ENCODE measurements at regions of chr4 and their contacts with region 1.

Region 1: DNA sequence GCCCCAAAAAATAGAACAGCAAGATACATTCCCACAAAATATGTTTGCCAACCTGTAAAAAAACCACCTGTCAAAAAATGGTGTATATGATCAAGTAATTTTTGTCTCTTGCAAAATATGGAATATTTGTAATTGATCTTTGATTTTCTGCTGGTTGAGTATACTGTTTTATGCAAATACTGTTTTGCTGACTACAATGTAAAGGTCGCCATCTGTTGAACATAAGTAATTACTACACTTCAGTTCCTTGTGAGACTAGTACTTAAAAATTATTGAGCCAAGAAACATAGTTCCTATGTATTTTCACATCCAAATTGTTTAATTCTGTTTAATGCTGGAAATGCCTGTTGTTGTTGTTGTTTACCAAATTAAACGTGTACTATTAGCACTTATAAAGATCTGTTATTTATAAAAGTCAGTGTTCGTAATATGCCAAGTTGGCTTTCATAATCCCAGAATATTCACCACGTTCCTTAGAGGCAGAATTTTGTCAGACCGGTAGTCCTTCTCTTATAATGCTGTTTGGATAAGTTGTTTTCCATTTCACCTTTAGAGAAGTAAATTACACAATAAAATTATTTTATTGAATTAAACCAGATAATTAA is 144.2 kb downstream of the PDLIM5 start:
- DNase-seq: peak; percentile 51

Region 2: DNA sequence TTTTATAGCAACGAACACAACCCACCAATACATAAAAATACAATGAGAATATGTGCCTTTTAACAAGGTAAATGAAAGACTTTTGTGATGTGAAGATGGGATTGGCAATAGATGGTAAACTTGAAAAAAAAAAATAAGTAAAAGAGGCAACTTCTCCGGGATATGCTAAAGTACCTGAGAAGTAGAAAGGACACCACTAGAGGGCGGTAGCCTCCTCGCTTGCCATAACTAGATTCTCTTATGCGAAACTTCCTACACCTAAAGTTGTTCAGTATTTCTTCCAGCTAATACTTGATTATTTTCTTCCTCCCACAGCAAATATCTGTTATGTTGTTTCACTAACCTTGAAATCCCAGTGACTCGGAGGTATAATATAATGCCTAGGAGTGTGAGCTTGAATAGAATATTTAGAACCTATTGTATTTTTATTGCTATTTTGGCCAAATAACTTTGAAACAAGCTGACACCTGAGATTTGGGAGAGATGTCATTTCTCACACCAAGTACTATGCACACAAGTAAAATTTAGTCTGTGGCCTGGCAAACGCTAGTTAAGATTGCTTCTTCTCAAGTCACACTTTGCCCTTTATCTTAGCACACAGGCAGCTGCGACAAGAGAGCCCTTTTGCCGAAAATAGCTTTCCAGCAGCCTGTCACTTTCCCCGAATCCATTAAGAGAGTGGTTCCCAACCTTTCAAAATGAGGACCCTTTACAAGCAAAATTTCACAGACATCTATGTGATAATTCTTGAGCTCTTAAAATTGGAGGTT is 189.1 kb before region 1 on chr4:
- in situ Hi-C with region 1: loop called (anchors 10 kb)
- DNase-seq: peak; percentile 76

Measured in KBM-7 (cell line).